ENCODE measurements at regions of chr17 and their contacts with region 1.

Region 1: DNA sequence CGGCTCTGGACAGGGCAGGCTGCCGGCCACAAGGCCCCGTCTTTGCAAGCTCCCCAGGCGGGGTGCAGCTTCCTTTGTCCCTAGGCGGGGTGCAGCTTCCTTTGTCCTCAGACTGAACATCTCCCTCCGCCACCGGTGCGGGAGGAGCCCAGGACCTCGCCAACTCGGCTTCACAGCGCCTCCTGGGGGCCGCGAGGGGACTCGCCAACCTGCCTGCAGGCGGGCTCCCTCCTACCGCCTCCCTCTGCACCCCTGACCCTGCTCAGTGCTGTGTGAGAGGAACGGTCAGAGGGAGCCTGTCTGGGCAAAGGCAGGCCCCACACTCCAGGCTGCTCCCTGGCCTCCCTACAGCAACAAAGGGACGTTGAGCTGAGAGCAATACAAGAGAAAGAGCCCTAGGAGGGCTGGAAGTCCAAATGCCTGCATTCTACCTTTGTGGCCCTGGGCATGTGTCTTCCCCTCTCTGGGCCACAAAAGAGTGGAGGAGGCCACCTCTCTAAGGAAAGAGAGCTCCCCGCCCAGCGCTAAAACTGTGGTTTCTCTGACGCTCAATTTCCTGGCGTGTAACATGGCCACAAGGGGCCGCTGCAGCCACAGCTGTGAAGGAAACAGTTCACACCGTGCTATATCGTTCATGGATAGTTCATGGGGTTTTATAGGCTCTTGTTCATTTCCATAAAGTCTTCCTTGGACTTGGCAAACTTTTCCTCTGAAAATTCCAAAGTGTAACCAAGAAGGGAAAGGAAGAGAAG is 20.9 kb upstream of the KRT19 start:
- DNase-seq: peak; percentile 74
- H3K4me3 ChIP-seq: peak overlapping the region in 2 of 3 experiments; percentile 20 to 23
- H3K27ac ChIP-seq: peak overlapping the region; percentile 74
- H3K4me1 ChIP-seq: peaks cover 19% of the 10 kb centered on the region
- H3K27me3 ChIP-seq: no peaks in the 10 kb centered on the region
- CTCF ChIP-seq: peak; percentile 68 to 95
- POLR2A ChIP-seq: peak; percentile 39

Region 2: DNA sequence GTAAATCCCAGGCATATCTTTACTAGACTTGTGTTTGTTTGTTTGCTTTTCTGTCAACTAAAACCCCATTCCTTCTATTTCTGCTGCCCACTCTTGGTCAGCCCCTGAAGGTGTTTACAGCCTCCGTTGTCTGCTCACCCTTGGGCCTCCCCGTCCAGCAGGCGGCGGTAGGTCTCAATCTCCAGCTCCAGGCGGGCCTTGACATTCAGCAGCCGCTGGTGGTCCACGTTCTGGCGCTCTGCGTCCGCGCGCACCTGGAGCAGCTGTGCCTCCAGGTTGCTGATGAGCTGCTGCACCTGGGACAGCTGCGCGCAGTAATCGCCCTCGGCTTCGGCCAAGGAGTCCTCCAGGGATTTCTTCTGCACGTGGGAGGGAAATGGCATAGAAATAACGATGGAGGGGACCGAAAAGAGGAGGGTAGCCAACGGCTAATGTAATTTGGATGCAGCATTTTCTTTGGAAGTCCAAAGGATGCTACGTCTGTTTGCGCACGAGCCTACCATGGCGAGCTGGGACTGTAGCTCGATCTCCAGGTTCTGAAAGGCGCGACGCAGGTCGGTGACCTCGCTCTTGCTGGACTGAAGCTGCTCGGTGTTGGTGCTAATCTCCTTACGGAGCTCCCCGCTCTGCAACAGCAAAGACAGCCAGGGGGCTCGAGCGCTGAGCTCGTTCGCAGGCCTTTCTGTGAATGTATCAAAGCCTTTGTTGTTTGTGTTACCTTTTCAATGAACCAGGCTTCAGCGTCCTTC is 685.9 kb before region 1 on chr17:
- CTCF ChIA-PET with region 1: interaction called, 70 read pairs
- POLR2A ChIA-PET with region 1: no interaction called
- dilution Hi-C with region 1: no loop called
- intact Hi-C with region 1: no loop called
- DNase-seq: peak; percentile 19
- H3K4me3 ChIP-seq: no peak overlapping the region
- H3K27ac ChIP-seq: no peak overlapping the region
- H3K4me1 ChIP-seq: no peaks in the 10 kb centered on the region
- H3K27me3 ChIP-seq: peaks cover 0 to 10% of the 10 kb centered on the region in 2 experiments
- CTCF ChIP-seq: peak; percentile 37 to 70
- POLR2A ChIP-seq: no peak

Region 3: DNA sequence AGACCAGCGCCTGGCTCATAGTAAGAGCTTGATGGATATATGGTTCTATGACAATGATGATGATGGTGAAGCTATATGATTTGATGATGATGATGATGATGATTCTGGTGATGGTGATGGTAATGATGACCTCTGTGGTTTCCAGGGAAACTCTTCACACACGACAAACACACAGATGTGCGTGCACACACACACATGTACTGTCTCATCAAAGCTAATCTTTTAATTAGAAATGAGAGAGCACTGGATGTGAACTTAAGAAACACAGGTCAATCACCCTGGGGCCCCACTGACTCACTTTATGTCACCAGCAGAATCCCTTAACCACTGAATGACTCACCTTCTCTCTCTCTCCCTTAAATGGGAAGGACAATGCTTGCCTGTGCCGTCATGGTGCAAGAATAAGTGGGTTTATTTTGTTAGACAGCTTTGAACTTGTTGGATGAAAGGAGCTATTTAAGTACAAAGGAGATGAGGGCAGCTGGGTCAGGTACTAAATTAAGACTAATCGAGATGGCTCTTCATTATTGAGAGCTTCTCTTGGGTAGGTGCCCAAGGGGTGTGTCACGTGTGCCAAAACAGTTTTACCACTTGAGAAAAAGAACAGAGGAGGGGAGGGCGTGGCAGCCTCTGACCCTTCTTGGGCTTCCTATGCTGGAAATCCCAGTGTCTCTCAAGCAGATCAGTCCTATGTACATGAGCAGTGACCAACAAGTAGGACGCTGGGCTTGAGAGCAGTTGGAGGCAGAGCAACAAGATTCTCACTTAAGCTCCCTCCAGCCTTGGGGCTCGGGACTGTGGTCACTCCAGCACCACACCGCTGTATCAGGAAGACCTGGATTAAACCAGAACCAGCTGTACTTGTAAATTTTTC is 145.0 kb before region 1 on chr17:
- CTCF ChIA-PET with region 1: interaction called, 20 read pairs
- POLR2A ChIA-PET with region 1: no interaction called
- dilution Hi-C with region 1: no loop called
- intact Hi-C with region 1: loop called (anchors 2 kb)
- DNase-seq: peak; percentile 48
- H3K4me3 ChIP-seq: peak overlapping the region in 1 of 3 experiments; percentile 9
- H3K27ac ChIP-seq: peak overlapping the region; percentile 16
- H3K4me1 ChIP-seq: peaks cover 18% of the 10 kb centered on the region
- H3K27me3 ChIP-seq: peaks cover 8 to 12% of the 10 kb centered on the region in 2 experiments
- CTCF ChIP-seq: no peak
- POLR2A ChIP-seq: no peak

Region 4: DNA sequence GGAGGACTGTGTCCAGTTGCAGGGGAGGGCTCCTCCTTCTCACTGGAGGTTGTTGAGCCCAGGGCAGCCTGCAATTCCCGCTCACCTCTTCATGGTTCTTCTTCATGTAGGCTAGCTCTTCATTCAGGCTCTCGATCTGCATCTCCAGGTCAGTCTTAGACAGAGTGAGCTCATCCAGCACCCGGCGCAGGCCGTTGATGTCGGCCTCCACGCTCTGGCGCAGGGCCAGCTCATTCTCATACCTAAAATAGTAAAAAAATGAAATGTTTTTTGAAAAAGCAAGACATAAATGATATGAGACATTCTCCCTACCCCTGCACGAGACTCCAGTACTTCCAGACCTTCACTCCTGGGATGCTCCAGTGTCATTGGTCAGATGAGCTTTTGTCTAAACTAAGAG is 45.8 kb before region 1 on chr17:
- CTCF ChIA-PET with region 1: interaction called, 350 read pairs
- POLR2A ChIA-PET with region 1: no interaction called
- dilution Hi-C with region 1: no loop called
- intact Hi-C with region 1: no loop called
- DNase-seq: no peak
- H3K4me3 ChIP-seq: no peak overlapping the region
- H3K27ac ChIP-seq: no peak overlapping the region
- H3K4me1 ChIP-seq: peaks cover 12% of the 10 kb centered on the region
- H3K27me3 ChIP-seq: no peaks in the 10 kb centered on the region
- CTCF ChIP-seq: no peak
- POLR2A ChIP-seq: no peak

Region 5: GRCh38 chr17:41538565-41538991 is 10.4 kb before region 1 on chr17:
- CTCF ChIA-PET with region 1: interaction called, 46 read pairs
- POLR2A ChIA-PET with region 1: no interaction called
- dilution Hi-C with region 1: no loop called
- intact Hi-C with region 1: no loop called
- DNase-seq: no peak
- H3K4me3 ChIP-seq: no peak overlapping the region
- H3K27ac ChIP-seq: no peak overlapping the region
- H3K4me1 ChIP-seq: no peaks in the 10 kb centered on the region
- H3K27me3 ChIP-seq: no peaks in the 10 kb centered on the region
- CTCF ChIP-seq: no peak
- POLR2A ChIP-seq: no peak

Region 6: DNA sequence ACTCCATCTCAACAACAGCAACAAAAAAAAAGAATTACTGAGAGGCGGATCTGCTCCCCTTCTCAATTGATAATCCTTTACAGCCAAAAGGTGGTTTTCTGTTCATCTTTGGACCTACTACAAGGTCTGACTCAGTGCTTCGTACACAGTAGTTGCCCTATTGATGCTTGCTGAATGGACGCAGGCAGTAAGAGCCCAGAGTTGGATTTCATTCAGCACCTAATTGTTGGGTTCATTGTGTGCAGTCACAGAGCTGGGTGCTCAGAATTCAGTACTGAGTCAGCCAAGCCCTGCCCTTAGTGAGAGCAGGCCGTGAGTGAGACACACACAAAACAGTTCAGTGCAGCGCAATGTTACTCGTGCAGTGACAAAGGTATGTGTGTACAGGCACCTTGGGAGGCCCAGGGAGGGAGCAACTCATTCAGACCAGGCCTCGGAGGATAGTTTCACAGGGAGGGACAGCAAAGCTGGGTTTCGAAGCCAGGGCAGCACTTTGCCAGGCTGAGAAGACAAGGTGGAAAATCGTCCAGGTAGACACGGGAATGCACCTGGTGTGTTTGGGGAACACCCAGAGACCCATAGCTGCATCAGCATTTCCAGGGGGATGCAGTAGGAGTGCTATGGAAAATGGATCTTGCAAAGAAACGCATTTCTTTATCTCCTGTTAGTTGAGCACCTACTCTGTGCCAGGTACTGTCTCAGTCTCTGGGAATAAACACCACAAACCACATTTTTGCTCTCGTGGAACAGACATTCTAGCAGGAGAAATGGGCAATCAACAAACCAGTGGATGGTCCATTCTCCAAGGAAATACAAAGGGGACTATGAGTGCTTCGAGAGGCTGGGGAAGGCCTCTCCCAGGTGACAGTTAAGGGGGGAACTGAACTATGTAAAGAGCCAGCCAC is 93.5 kb after region 1 on chr17:
- CTCF ChIA-PET with region 1: interaction called, 319 read pairs
- POLR2A ChIA-PET with region 1: no interaction called
- dilution Hi-C with region 1: no loop called
- intact Hi-C with region 1: no loop called
- DNase-seq: no peak
- H3K4me3 ChIP-seq: no peak overlapping the region
- H3K27ac ChIP-seq: no peak overlapping the region
- H3K4me1 ChIP-seq: no peaks in the 10 kb centered on the region
- H3K27me3 ChIP-seq: no peaks in the 10 kb centered on the region
- CTCF ChIP-seq: no peak
- POLR2A ChIP-seq: no peak

Region 7: GRCh38 chr17:41688699-41689496 is 139.9 kb after region 1 on chr17 and contains the start of gene EIF1:
- CTCF ChIA-PET with region 1: interaction called, 15 read pairs
- POLR2A ChIA-PET with region 1: interaction called, 3 read pairs
- dilution Hi-C with region 1: no loop called
- intact Hi-C with region 1: no loop called
- DNase-seq: peak; percentile 100
- H3K4me3 ChIP-seq: peak within 1 kb of the TSS; percentile 68 to 95 (median 73)
- H3K27ac ChIP-seq: peak within 1 kb of the TSS; percentile 97
- H3K4me1 ChIP-seq: peaks cover 20% of the 10 kb centered on the region
- H3K27me3 ChIP-seq: no peaks in the 10 kb centered on the region
- CTCF ChIP-seq: no peak
- POLR2A ChIP-seq: peak; percentile 95
- total RNA-seq, gene EIF1: 814 and 839 TPM in 2 replicates

Region 8: GRCh38 chr17:41724476-41725050 is 175.5 kb after region 1 on chr17:
- CTCF ChIA-PET with region 1: no interaction called
- POLR2A ChIA-PET with region 1: no interaction called
- dilution Hi-C with region 1: no loop called
- intact Hi-C with region 1: no loop called
- DNase-seq: no peak
- H3K4me3 ChIP-seq: no peak overlapping the region
- H3K27ac ChIP-seq: no peak overlapping the region
- H3K4me1 ChIP-seq: no peaks in the 10 kb centered on the region
- H3K27me3 ChIP-seq: peaks cover 0 to 1% of the 10 kb centered on the region in 2 experiments
- CTCF ChIP-seq: no peak
- POLR2A ChIP-seq: no peak

Measured in endothelial cell of umbilical vein (primary cell).